B cell (primary cell): ENCODE measurements at regions of chr3 and their contacts with region 1.

Region 1: GRCh38 chr3:32947789-32948238 is 3.6 kb upstream of the CCR4 start:
- DNase-seq: peak; percentile 88
- ATAC-seq: peak; percentile 83
- H3K4me3 ChIP-seq: no peak overlapping the region
- H3K4me3 Mint-ChIP-seq: no peak overlapping the region
- H3K27ac ChIP-seq: no peak overlapping the region
- H3K27ac Mint-ChIP-seq: no peak overlapping the region
- H3K4me1 ChIP-seq: peaks cover 0 to 18% of the 10 kb centered on the region in 2 donors
- H3K4me1 Mint-ChIP-seq: peaks cover 13% of the 10 kb centered on the region
- H3K27me3 ChIP-seq: no peaks in the 10 kb centered on the region
- H3K27me3 Mint-ChIP-seq: no peaks in the 10 kb centered on the region
- CTCF ChIP-seq: peak; percentile 87

Region 2: DNA sequence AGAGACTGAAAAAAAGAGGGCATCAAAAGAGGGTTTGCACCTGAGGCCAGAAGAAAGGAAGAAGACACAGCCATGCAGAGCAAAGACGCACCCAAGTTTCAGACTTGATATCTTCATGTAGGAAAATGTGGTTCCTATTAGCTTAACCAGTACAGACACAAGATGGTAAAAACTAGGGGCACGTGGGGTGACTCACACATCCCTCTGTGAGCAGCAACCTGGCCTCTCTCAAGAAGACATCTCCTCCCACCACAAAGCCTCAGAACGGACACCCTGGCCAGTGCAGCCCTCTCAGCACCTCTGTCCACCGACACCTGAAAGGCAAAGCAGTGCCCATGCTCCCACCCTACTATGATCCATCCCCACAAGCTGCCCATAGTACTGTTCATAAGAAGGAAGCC is 115.8 kb after region 1 on chr3:
- CTCF ChIA-PET with region 1: interaction called, 15 read pairs
- POLR2A ChIA-PET with region 1: interaction called, 3 read pairs
- intact Hi-C with region 1: loop called (anchors 2 kb)
- DNase-seq: peak; percentile 68
- ATAC-seq: peak; percentile 82
- H3K4me3 ChIP-seq: no peak overlapping the region
- H3K4me3 Mint-ChIP-seq: peak overlapping the region; percentile 49
- H3K27ac ChIP-seq: peak overlapping the region in 1 of 2 donors; percentile 50
- H3K27ac Mint-ChIP-seq: peak overlapping the region; percentile 92
- H3K4me1 ChIP-seq: peaks cover 28 to 68% of the 10 kb centered on the region in 2 donors
- H3K4me1 Mint-ChIP-seq: peaks cover 43% of the 10 kb centered on the region
- H3K27me3 ChIP-seq: no peaks in the 10 kb centered on the region
- H3K27me3 Mint-ChIP-seq: no peaks in the 10 kb centered on the region
- CTCF ChIP-seq: no peak

Region 3: DNA sequence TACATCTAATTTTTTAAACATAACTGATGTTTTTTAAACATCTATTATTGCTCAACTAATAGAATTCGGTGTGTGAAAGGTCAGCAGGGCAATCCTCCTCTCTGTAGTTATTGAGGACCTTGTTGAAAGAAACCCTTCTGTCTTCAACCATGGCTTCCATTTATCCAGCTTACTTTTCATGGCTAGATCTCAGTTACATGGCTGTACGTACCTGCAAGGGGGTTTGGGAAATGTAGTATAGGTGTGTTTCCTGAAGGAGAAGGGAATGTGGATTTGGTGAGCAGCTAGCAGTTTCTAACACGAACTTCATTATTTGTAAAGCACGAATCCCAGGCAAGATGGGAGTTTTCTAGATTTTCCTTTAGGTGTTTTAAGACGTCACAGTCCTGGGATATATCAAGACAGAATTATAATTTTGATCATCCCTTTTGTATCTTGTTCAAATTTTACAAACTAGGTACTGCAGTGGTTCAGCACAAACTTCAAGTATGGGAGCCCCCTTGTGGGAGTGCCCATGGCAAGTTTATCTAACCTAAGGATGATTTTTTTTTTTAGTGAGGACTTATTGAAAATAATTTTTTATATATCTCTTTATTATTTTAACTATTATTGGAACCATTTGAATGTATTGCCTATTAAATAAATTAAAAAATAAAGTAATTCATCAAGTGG is 371.0 kb after region 1 on chr3:
- CTCF ChIA-PET with region 1: no interaction called
- POLR2A ChIA-PET with region 1: no interaction called
- intact Hi-C with region 1: no loop called
- DNase-seq: no peak
- ATAC-seq: no peak
- H3K4me3 ChIP-seq: no peak overlapping the region
- H3K4me3 Mint-ChIP-seq: no peak overlapping the region
- H3K27ac ChIP-seq: no peak overlapping the region
- H3K27ac Mint-ChIP-seq: no peak overlapping the region
- H3K4me1 ChIP-seq: no peaks in the 10 kb centered on the region
- H3K4me1 Mint-ChIP-seq: no peaks in the 10 kb centered on the region
- H3K27me3 ChIP-seq: peaks cover 0 to 2% (median 0%) of the 10 kb centered on the region in 4 experiments
- H3K27me3 Mint-ChIP-seq: peaks cover 30% of the 10 kb centered on the region
- CTCF ChIP-seq: no peak